ENCODE measurements at regions of chr2 and their contacts with region 1.

Region 1: DNA sequence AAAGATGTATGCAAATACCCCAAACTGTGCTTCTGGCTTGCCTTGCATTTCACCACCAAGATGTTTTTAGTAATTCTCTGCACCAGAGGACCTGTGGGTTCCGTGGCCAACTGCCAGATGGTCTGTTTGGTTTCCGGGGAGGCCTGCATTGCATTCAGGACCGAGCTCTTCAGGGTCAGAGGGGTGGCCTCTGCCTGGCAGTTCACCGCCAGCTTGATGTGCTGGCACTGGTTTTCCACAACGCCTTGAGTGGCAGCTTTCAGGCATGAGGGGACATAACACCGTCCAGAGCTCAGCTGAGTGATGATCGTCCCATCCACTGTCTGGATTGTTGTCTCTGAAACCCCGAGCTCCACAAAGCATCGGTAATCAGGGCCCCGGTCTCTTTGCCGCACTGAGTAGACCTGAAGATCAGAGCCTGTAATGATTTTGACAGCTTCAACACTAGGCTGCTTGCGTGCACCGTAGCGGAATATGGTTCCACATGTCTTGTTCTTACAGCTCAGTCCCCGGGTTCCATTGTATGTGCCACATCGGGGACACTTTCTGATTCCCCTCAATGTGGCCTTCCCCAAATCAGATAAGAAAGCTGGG is 9.4 kb downstream of the C2orf42 start:
- DNase-seq: peak; percentile 19
- ATAC-seq: peak; percentile 75
- H3K4me3 Mint-ChIP-seq: peak overlapping the region; percentile 71
- H3K27ac Mint-ChIP-seq: peak overlapping the region; percentile 75
- H3K4me1 Mint-ChIP-seq: peaks cover 15% of the 10 kb centered on the region
- H3K27me3 Mint-ChIP-seq: no peaks in the 10 kb centered on the region
- CTCF ChIP-seq: no peak

Region 2: GRCh38 chr2:68987021-68987503 is 1194.4 kb before region 1 on chr2:
- CTCF ChIA-PET with region 1: no interaction called
- POLR2A ChIA-PET with region 1: no interaction called
- intact Hi-C with region 1: no loop called
- DNase-seq: no peak
- ATAC-seq: no peak
- H3K4me3 Mint-ChIP-seq: no peak overlapping the region
- H3K27ac Mint-ChIP-seq: no peak overlapping the region
- H3K4me1 Mint-ChIP-seq: no peaks in the 10 kb centered on the region
- H3K27me3 Mint-ChIP-seq: peaks cover 8% of the 10 kb centered on the region
- CTCF ChIP-seq: no peak

Region 3: DNA sequence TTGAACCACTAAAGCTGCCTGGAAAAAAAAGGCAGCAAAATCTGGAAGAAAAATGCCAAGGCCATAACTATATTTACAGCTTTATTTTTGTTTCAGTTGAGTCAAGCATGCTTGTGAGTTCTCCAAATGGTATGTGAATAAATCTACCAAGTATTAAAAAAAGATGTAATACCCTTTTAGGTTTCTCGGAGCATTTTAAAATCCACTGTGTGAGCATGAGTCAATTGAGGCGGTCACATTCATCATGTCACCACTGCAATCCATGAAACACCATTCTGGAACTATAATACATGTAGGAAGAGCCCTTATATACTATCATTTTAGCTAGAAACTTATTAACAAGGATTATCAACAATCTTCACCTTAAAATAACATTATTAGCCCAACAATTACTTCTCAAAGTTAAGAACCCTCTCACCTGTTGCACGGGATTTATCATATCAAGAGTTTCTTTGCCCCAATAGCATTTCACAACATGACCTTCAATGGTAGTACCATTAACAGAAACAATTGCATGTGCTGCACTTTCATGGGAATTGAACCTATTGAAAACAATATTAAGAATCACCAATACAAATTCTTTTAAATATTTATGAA is 33.6 kb after region 1 on chr2:
- CTCF ChIA-PET with region 1: no interaction called
- POLR2A ChIA-PET with region 1: interaction called, 13 read pairs
- intact Hi-C with region 1: no loop called
- DNase-seq: no peak
- ATAC-seq: no peak
- H3K4me3 Mint-ChIP-seq: no peak overlapping the region
- H3K27ac Mint-ChIP-seq: no peak overlapping the region
- H3K4me1 Mint-ChIP-seq: no peaks in the 10 kb centered on the region
- H3K27me3 Mint-ChIP-seq: no peaks in the 10 kb centered on the region
- CTCF ChIP-seq: no peak